Heart right ventricle (tissue), 16 donors: ENCODE measurements at regions of chr20 and their contacts with region 1.

Region 1: DNA sequence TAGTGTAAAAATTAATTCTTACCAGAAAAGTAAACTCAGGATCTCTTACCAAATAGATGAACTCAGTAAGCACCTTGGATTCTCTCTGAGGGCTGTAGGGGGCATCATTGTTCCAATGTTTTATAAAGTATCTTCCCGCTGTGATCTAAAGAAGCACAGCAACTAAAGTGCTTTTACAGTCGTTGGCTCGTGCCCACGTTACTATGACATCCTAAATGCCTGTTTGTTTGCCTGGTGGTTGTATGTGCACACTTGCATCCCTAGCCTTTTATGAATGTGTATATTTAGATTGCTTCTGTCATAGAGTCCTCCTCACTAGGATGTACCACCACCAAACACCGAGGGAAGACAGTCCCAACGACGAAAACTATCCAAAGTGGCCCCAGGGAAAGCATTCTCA is 34.5 kb downstream of the SLX4IP start:
- DNase-seq: peak in 1 of 2 donors; percentile 61
- ATAC-seq: peak in 7 of 8 donors; percentile 44 to 81 (median 75)
- H3K4me3 ChIP-seq: no peak overlapping the region
- H3K27ac ChIP-seq: peak overlapping the region in 2 of 10 donors; percentile 3 to 29
- H3K4me1 ChIP-seq: peaks cover 0 to 60% (median 51%) of the 10 kb centered on the region in 9 donors
- H3K27me3 ChIP-seq: no peaks in the 10 kb centered on the region
- CTCF ChIP-seq: peak; percentile 38 to 80 (median 69)

Region 2: GRCh38 chr20:10647465-10647864 is 177.9 kb after region 1 on chr20:
- intact Hi-C with region 1: loop called in 2 of 10 experiments (anchors 10 kb)
- DNase-seq: no peak
- ATAC-seq: no peak
- H3K4me3 ChIP-seq: no peak overlapping the region
- H3K27ac ChIP-seq: peak overlapping the region in 4 of 10 donors; percentile 2 to 84 (median 28)
- H3K4me1 ChIP-seq: peaks cover 5 to 90% (median 41%) of the 10 kb centered on the region in 9 donors
- H3K27me3 ChIP-seq: no peaks in the 10 kb centered on the region
- CTCF ChIP-seq: peak in 6 of 9 donors; percentile 13 to 47 (median 25)

Region 3: GRCh38 chr20:10708351-10709185 is 239.0 kb after region 1 on chr20:
- intact Hi-C with region 1: no loop called
- DNase-seq: no peak
- ATAC-seq: no peak
- H3K4me3 ChIP-seq: no peak overlapping the region
- H3K27ac ChIP-seq: no peak overlapping the region
- H3K4me1 ChIP-seq: peaks cover 0 to 7% (median 0%) of the 10 kb centered on the region in 9 donors
- H3K27me3 ChIP-seq: no peaks in the 10 kb centered on the region
- CTCF ChIP-seq: no peak

Region 4: GRCh38 chr20:11216451-11217314 is 747.1 kb after region 1 on chr20:
- intact Hi-C with region 1: loop called in 1 of 10 experiments (anchors 10 kb)
- DNase-seq: no peak
- ATAC-seq: peak in 5 of 8 donors; percentile 21 to 46 (median 31)
- H3K4me3 ChIP-seq: no peak overlapping the region
- H3K27ac ChIP-seq: peak overlapping the region in 5 of 10 donors; percentile 5 to 54 (median 36)
- H3K4me1 ChIP-seq: peaks cover 5 to 25% (median 22%) of the 10 kb centered on the region in 9 donors
- H3K27me3 ChIP-seq: no peaks in the 10 kb centered on the region
- CTCF ChIP-seq: no peak